Activated T-helper 1 cell treated with anti-CD3 and anti-CD28 coated beads, Interleukin-12 subunit alpha, Interleukin-12 subunit beta, Interleukin-2, Interleukin-4 antibody, amounts not matched to agents 30 ng/mL and 10 ng/mL and 1 ng/mL, durations not matched to agents 14 hours and 24 hours and 36 hours (primary cell): ENCODE measurements at regions of chr2 and their contacts with region 1.

Region 1: DNA sequence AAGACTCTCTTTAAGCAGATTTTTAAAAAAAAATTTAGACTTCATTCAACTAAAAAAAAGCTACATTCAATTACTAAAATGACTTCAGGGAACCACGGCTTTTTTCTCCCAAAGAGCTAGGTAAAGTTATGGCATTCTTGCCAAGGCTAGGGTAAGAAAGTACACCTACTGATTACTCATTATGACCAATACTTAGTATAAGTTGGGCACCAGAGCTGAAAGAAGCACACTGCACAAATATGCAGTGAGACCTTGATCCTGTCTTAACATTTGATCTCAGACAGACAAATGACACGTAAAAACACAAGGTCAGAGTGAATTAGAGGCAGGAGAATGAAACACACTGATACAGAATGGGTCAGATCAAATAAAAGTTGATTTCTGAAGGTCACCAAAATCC is 88.7 kb downstream of the THADA start:
- DNase-seq: no peak
- H3K4me3 Mint-ChIP-seq: no peak overlapping the region
- H3K27ac Mint-ChIP-seq: no peak overlapping the region
- H3K4me1 Mint-ChIP-seq: peaks cover 28% of the 10 kb centered on the region
- H3K27me3 Mint-ChIP-seq: no peaks in the 10 kb centered on the region

Region 2: DNA sequence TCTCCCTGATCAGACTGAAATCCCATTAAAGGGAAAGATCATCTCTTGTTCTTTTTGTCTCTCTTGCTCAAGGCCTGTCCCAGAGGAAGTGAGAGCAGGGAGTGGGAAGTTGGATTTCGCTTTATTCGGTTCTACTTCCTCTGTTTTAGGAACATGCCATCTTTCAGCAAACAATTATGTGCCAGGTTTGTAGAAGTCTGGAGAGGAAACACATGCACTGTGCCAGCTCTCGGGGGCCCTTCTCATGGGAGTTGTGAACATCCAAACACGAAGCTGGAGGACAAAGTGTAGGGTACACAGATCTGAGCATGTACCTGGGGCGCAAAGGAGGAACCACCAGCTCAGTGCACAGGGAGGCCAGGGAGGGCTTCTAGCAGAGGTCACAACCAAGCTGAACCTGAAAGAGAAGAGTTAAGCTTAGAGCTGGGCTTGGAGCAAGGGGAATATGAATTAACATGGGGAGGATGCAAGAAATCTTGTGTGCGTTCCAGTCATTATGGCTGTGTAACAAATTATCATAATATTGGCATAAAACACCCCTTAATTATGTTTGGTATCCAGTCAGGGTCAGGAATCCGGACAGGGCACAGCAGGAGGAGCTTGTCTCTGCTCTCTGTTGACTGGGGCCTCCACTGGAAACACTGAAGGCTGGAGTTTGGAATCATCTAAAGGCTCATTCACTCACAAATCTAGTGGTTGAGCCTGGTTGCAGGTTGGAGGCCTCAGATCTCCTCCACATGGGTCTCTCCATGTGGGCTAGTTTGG is 409.3 kb before region 1 on chr2:
- intact Hi-C with region 1: no loop called
- DNase-seq: no peak
- H3K4me3 Mint-ChIP-seq: no peak overlapping the region
- H3K27ac Mint-ChIP-seq: no peak overlapping the region
- H3K4me1 Mint-ChIP-seq: no peaks in the 10 kb centered on the region
- H3K27me3 Mint-ChIP-seq: peaks cover 4% of the 10 kb centered on the region

Region 3: GRCh38 chr2:43576981-43577892 is 70.1 kb after region 1 on chr2:
- intact Hi-C with region 1: loop called (anchors 5 kb)
- DNase-seq: no peak
- H3K4me3 Mint-ChIP-seq: no peak overlapping the region
- H3K27ac Mint-ChIP-seq: no peak overlapping the region
- H3K4me1 Mint-ChIP-seq: peaks cover 27% of the 10 kb centered on the region
- H3K27me3 Mint-ChIP-seq: no peaks in the 10 kb centered on the region